Common myeloid progenitor, CD34-positive (primary cell): ENCODE measurements at regions of chr1 and their contacts with region 1.

Region 1: DNA sequence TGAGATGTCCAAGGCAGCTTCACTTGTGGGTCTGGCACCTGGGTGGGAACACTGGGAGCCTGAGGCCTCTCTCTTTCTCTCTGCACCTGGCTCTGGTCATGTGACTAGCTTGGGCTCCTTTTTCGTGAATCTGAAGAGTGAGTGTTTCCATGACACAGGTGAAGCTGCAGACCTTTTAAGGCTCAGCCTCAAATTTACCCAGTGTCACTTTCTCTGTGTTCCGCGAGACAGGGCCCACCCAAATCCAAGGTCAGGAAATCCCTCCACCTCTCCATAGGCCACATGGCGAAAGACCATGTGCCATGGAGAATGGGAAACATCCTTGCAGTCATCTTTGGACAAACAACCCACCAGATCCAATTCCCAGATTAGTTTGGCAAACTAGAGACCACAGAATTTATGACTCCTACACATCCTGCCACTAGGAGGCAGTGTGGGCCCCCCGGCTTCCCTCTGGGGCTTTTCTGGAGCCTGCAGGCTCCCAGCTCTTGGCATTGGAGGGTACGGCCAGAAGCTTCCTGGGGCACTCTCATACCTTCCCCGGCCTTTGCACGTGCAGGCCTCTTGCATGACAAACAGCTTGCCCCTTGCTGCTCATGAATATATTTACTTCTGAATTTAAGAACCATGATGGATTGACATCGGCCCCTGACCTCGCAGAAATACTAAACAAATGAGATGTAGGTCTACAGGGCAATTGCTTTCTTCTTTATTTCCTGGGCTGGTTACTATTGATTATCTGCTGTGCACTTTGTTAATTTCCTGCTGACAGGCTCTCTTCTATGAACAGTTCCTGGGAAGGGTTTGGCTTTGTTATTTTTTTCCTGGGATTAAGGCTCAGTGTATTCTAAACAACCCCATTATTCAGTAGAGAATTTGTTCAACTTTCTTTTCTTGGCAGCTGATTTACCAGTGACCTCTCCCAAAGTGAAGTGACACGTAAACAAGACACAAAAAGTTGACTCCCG is 180.7 kb downstream of the KAZN start:
- DNase-seq: peak in 2 of 3 donors; percentile 25 to 40
- H3K4me3 ChIP-seq: no peak overlapping the region
- H3K27ac ChIP-seq: no peak overlapping the region
- H3K4me1 ChIP-seq: peaks cover 11 to 63% (median 49%) of the 10 kb centered on the region in 4 experiments
- H3K27me3 ChIP-seq: no peaks in the 10 kb centered on the region

Region 2: GRCh38 chr1:14765773-14766172 is 13.4 kb before region 1 on chr1:
- CTCF ChIA-PET with region 1: interaction called, 15 read pairs
- POLR2A ChIA-PET with region 1: no interaction called
- DNase-seq: no peak
- H3K4me3 ChIP-seq: no peak overlapping the region
- H3K27ac ChIP-seq: no peak overlapping the region
- H3K4me1 ChIP-seq: peaks cover 0 to 23% (median 20%) of the 10 kb centered on the region in 4 experiments
- H3K27me3 ChIP-seq: no peaks in the 10 kb centered on the region

Region 3: DNA sequence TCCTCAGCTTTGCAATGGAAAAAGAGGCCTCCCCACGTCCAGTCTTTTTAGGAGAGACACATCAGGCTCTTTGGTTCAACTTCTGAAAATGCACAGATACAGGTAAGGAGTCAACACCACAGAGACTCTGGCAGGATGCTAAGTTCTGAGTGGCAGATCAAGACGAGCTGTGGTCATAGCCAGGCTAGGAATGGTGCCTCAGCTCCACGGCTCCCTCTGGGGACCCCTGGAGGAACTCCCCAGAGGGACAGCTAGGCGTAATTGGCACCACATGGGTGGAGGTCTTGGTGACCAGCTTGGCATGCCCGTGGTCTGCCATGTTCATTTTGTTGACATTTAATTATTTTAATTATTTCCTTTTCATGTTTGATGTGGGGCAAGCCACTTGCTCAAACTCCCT is 25.4 kb after region 1 on chr1:
- CTCF ChIA-PET with region 1: interaction called, 11 read pairs
- POLR2A ChIA-PET with region 1: no interaction called
- DNase-seq: peak in 2 of 3 donors; percentile 54 to 64
- H3K4me3 ChIP-seq: no peak overlapping the region
- H3K27ac ChIP-seq: no peak overlapping the region
- H3K4me1 ChIP-seq: peaks cover 0 to 11% (median 2%) of the 10 kb centered on the region in 4 experiments
- H3K27me3 ChIP-seq: no peaks in the 10 kb centered on the region

Region 4: DNA sequence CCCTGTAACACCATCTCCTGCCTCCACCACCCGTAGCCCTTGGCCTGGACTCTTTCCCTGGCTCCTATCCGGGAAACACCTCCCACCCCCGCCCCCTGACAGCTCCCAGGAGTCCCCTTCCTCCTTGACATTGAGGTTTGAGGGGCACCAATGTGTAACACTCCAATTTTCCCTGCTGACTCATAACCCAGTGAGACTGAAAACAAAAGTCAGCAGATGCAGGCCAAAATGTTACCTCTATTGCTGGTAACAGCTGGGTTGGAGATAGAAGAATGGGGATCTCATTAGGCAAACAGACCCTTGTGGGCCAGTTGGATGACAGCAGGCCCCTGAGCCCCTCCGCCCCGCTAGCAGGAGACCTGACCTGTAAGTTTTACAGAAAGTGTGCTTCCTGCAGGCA is 56.5 kb after region 1 on chr1:
- CTCF ChIA-PET with region 1: no interaction called
- POLR2A ChIA-PET with region 1: no interaction called
- DNase-seq: no peak
- H3K4me3 ChIP-seq: no peak overlapping the region
- H3K27ac ChIP-seq: no peak overlapping the region
- H3K4me1 ChIP-seq: no peaks in the 10 kb centered on the region
- H3K27me3 ChIP-seq: peaks cover 0 to 10% (median 0%) of the 10 kb centered on the region in 5 experiments